ENCODE measurements at regions of chr5 and their contacts with region 1.

Region 1: DNA sequence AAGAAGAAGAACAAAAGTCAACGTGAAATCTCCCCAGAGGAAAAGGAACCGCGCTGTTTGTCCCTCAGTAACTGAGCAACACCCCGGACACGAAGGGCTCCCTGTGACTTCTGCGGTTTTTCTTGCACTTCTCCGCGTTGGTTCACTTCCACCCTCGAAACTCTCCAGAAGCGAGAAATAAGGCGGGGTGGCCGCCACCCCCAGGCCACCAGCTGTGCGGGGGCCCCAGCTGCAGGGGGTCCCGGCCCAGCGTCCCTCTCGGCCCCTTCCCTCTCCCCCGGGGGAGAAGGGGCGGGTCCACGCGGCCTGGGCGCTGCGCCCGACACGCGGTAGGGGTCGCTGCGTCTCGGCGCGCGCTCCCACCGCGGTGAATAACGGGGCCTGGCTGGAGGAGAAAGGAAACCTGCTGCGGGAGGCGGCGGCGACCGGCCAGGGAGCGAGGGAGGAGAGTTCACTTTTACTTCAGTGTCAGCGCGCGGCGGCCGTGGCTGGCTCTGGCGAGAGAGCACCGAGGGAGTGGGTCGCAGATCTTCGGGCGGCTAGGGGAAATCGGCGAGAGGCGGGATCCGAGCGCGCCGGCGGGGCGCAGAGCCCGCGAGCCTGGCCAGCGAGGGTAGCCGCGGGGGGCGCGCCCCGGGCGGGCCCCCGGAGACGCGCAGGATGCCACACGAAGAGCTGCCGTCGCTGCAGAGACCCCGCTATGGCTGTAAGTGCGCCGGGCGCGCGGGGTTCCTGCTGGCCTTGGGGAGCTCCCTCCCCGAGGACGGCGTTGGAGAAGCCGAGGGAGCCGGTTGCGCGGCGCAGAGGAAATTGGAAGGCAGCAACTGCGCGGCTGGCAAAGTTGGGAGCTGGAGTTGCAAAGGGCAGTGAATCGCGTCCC is at the start of gene IQGAP2:
- DNase-seq: peak; percentile 77 to 90
- H3K4me3 ChIP-seq: peak within 1 kb of the TSS; percentile 86
- H3K4me3 Mint-ChIP-seq: peak within 1 kb of the TSS; percentile 79
- H3K27ac Mint-ChIP-seq: peak within 1 kb of the TSS; percentile 98
- H3K4me1 ChIP-seq: peaks cover 43% of the 10 kb centered on the region
- H3K4me1 Mint-ChIP-seq: peaks cover 19% of the 10 kb centered on the region
- H3K27me3 ChIP-seq: no peaks in the 10 kb centered on the region
- H3K27me3 Mint-ChIP-seq: no peaks in the 10 kb centered on the region
- CTCF ChIP-seq: peak; percentile 86 to 95
- total RNA-seq, gene IQGAP2: 85.6 and 89.4 TPM in 2 replicates

Region 2: DNA sequence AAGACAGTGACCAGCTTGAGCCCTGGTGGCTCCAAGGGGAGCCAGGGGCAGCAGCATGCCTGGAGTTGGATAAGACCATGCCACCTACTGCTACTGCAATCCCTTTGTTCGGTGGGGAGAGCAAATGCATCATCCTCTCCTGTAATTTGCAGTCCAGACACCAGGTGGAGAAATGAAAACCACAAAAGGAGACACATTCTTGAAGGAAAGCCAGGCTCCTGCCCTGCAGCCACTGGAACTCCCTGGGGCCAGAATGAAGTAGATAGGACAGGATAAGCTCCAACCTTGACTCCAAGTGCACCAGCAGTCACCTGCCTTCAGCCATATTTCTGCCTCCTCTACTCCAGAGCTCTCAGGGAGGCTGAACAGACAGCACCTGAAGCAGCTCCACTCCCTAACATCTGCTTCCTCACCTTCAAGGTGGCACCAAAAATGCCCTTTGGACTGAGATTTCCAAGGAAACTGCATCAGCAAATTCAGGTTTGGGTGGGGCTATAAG is 65.1 kb before region 1 on chr5:
- CTCF ChIA-PET with region 1: interaction called, 7 read pairs
- POLR2A ChIA-PET with region 1: no interaction called
- intact Hi-C with region 1: loop called (anchors 1 kb)
- DNase-seq: peak; percentile 83 to 89
- H3K4me3 ChIP-seq: no peak overlapping the region
- H3K4me3 Mint-ChIP-seq: no peak overlapping the region
- H3K27ac Mint-ChIP-seq: peak overlapping the region; percentile 69
- H3K4me1 ChIP-seq: peaks cover 35% of the 10 kb centered on the region
- H3K4me1 Mint-ChIP-seq: peaks cover 32% of the 10 kb centered on the region
- H3K27me3 ChIP-seq: no peaks in the 10 kb centered on the region
- H3K27me3 Mint-ChIP-seq: no peaks in the 10 kb centered on the region
- CTCF ChIP-seq: peak; percentile 52 to 58

Region 3: DNA sequence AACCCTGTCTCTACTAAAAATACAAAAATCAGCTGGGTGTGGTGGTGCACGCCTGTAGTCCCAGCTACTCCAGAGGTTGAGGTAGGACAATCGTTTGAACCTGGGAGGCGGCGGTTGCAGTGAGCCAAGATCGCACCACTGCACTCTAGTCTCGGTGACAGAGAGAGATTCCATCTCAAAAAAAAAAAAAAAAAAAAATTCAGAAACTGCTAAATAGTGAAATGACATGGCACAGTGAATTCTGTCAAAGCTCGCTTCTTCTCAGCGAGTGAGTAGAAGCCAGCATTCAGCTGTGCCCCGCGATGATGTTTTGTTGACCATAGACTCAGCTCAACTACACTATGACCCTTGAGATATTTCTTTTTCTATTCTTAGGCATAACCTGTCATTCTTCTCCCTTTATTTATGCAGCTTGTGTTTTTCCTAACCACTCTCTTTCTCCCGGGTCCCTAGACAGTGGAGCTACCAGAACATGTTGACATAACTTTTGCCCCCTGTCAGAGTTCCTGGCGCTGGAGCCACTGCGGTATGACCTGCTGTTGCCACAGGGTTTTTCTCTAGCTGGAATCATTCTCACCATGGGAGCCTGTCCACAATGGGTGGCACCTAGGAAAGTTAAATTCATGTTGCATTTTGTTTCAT is 13.5 kb before region 1 on chr5:
- CTCF ChIA-PET with region 1: interaction called, 4 read pairs
- POLR2A ChIA-PET with region 1: no interaction called
- intact Hi-C with region 1: loop called (anchors 1 kb)
- DNase-seq: peak; percentile 40 to 59
- H3K4me3 ChIP-seq: no peak overlapping the region
- H3K4me3 Mint-ChIP-seq: peak overlapping the region; percentile 55
- H3K27ac Mint-ChIP-seq: peak overlapping the region; percentile 78
- H3K4me1 ChIP-seq: peaks cover 51% of the 10 kb centered on the region
- H3K4me1 Mint-ChIP-seq: peaks cover 40% of the 10 kb centered on the region
- H3K27me3 ChIP-seq: no peaks in the 10 kb centered on the region
- H3K27me3 Mint-ChIP-seq: no peaks in the 10 kb centered on the region
- CTCF ChIP-seq: no peak

Region 4: GRCh38 chr5:76521240-76521758 is 118.2 kb after region 1 on chr5:
- CTCF ChIA-PET with region 1: no interaction called
- POLR2A ChIA-PET with region 1: no interaction called
- intact Hi-C with region 1: loop called (anchors 5 kb)
- DNase-seq: no peak
- H3K4me3 ChIP-seq: no peak overlapping the region
- H3K4me3 Mint-ChIP-seq: peak overlapping the region; percentile 2
- H3K27ac Mint-ChIP-seq: peak overlapping the region; percentile 85
- H3K4me1 ChIP-seq: peaks cover 73% of the 10 kb centered on the region
- H3K4me1 Mint-ChIP-seq: peaks cover 13% of the 10 kb centered on the region
- H3K27me3 ChIP-seq: no peaks in the 10 kb centered on the region
- H3K27me3 Mint-ChIP-seq: no peaks in the 10 kb centered on the region
- CTCF ChIP-seq: no peak

Region 5: DNA sequence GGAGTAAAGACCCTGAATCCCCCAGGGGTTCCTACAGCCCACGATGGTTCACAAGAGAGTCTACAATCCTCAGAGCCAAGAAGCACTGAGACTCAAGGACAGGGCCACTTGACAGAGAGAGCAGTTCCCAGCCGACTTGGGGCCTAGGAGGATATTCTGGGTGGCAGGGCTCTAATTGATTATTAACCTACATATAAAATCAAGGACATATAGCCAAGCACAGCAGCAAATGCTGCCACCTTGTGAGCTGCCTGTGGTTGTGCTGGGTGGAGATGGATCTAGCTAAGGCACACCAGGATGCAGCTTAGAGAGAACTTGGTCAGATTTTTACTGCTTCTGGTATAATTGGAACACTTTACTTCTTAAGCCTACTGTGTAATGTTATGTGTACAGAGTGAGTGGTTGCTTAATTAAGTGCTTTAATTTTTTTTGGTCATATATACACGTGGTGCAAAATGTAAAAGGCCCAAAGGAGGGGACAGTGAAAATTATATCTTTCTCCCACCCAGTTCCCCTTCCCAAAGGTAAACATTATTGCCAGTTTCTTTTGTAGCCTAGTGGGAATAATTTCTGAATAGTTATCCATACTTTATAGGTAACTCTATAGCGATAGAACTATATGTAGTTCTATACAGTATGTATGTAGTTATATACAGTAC is 141.3 kb after region 1 on chr5:
- CTCF ChIA-PET with region 1: interaction called, 16 read pairs
- POLR2A ChIA-PET with region 1: interaction called, 7 read pairs
- intact Hi-C with region 1: loop called (anchors 1 kb)
- DNase-seq: peak; percentile 69 to 77
- H3K4me3 ChIP-seq: no peak overlapping the region
- H3K4me3 Mint-ChIP-seq: no peak overlapping the region
- H3K27ac Mint-ChIP-seq: peak overlapping the region; percentile 51
- H3K4me1 ChIP-seq: peaks cover 76% of the 10 kb centered on the region
- H3K4me1 Mint-ChIP-seq: peaks cover 35% of the 10 kb centered on the region
- H3K27me3 ChIP-seq: no peaks in the 10 kb centered on the region
- H3K27me3 Mint-ChIP-seq: no peaks in the 10 kb centered on the region
- CTCF ChIP-seq: peak; percentile 68 to 87

Region 6: DNA sequence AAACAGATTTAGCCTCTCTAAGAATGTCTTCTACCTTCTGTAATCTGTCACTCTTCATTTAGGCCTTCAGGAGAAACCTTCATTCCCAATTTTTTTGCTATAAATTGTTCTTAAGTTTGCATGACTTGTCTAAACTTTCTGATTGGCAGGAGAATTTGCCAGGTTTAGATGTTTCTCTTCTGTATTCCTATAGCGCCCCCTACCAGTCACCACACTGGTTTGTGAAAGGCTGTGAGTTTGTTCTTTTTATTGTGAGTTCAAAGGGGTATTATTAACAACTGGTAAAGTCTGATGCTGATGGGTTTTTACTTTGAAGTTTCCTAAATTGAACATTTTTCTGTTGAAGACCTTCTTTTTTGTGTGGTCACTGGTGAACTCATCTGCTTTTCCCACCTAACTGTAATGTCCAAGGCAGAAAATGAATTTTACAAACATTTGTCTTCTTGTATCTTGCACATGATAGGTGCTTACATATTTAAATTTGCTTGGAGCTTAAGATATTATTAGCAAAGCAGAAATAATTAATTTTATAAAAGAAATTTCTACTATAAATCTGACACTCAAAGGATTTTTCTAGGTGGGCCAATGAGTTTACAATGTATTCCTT is 238.5 kb after region 1 on chr5:
- CTCF ChIA-PET with region 1: no interaction called
- POLR2A ChIA-PET with region 1: interaction called, 6 read pairs
- intact Hi-C with region 1: loop called (anchors 10 kb)
- DNase-seq: peak; percentile 51 to 75
- H3K4me3 ChIP-seq: no peak overlapping the region
- H3K4me3 Mint-ChIP-seq: no peak overlapping the region
- H3K27ac Mint-ChIP-seq: no peak overlapping the region
- H3K4me1 ChIP-seq: no peaks in the 10 kb centered on the region
- H3K4me1 Mint-ChIP-seq: peaks cover 4% of the 10 kb centered on the region
- H3K27me3 ChIP-seq: no peaks in the 10 kb centered on the region
- H3K27me3 Mint-ChIP-seq: no peaks in the 10 kb centered on the region
- CTCF ChIP-seq: peak; percentile 70 to 86

Region 7: DNA sequence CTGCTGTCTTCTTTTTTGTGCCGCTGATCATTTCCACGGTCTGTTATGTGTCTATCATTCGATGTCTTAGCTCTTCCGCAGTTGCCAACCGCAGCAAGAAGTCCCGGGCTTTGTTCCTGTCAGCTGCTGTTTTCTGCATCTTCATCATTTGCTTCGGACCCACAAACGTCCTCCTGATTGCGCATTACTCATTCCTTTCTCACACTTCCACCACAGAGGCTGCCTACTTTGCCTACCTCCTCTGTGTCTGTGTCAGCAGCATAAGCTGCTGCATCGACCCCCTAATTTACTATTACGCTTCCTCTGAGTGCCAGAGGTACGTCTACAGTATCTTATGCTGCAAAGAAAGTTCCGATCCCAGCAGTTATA is 329.9 kb after region 1 on chr5:
- CTCF ChIA-PET with region 1: no interaction called
- POLR2A ChIA-PET with region 1: no interaction called
- intact Hi-C with region 1: no loop called
- DNase-seq: no peak
- H3K4me3 ChIP-seq: no peak overlapping the region
- H3K4me3 Mint-ChIP-seq: no peak overlapping the region
- H3K27ac Mint-ChIP-seq: no peak overlapping the region
- H3K4me1 ChIP-seq: no peaks in the 10 kb centered on the region
- H3K4me1 Mint-ChIP-seq: peaks cover 5% of the 10 kb centered on the region
- H3K27me3 ChIP-seq: no peaks in the 10 kb centered on the region
- H3K27me3 Mint-ChIP-seq: no peaks in the 10 kb centered on the region
- CTCF ChIP-seq: no peak